ENCODE measurements at regions of chr1 and their contacts with region 1.

Region 1: DNA sequence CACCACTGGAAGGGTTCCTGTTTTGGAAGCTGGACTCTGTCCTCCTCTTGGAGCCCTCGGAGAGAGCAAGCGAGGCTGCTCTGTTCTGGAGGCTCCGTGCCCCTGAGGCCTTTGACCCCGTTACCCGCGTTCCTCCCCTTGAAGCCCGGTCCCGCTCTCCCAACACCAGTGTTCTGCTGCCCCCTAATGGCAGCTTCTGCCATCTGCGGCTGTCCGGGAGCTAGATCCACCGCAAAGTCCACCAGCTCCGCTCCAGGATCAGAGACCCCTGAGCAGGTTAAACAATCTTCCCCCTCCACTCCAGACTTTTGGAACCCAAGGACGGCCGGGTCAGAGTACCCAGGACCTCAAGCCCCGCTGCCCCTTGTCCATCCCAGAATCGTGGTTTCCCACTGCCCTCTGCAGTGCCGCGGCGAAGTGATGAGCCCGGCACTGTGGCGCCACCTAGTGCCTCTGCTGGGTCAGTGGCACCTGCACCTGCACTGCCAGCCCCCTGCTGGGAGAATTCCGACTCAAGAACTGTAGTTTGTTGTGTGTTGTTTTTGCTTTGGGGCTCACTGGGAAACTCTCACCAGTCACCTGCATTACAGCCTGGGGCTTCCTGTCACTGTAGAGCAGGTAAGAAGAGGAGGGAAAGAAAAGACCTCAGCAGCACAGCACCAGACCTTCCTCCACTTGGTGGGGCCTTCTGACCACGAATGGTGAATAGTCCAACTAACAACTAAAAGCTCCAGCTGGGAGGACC is 63.5 kb upstream of the NFASC start:
- DNase-seq: peak; percentile 90
- H3K4me3 Mint-ChIP-seq: peak overlapping the region; percentile 66
- H3K27ac Mint-ChIP-seq: no peak overlapping the region
- H3K4me1 Mint-ChIP-seq: no peaks in the 10 kb centered on the region
- H3K27me3 Mint-ChIP-seq: peaks cover 42% of the 10 kb centered on the region
- CTCF ChIP-seq: peak; percentile 100

Region 2: DNA sequence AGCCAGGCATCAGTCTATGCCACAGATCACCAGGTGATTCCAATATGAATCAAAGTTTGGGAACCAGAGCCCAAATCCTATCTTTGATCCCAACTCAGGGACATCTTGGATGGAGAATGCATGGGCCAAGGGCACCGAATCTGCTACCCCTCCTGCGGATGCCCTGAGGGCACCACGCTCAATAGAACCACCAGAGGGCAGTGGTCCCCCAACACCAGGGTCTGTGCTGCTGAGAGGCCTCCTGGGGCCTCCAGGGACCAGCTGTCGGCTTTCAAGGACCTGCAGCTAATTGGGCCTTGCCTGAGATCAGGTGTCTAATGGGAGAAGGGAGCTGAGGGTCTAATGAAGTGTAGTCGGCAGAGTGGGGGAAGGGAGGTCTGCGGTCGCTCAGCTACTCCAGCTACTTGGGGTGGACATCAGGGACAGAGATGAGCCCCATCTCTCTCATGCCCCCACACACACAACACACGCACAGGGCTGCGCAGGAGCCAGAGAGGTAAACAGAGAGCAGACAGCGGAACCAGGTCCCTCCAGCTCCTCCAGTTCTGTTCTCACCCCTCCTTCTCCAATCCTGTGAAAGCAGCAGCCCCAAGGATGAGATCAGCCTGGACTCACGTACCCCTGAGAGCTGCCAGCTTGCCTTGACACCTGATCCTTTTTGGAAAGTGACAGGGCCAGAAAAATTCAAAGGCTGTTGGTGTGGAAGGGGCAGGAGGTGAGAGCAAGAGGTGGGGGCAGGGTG is 360.6 kb before region 1 on chr1:
- CTCF ChIA-PET with region 1: interaction called, 10 read pairs
- intact Hi-C with region 1: no loop called
- DNase-seq: peak; percentile 89
- H3K4me3 Mint-ChIP-seq: no peak overlapping the region
- H3K27ac Mint-ChIP-seq: no peak overlapping the region
- H3K4me1 Mint-ChIP-seq: peaks cover 79% of the 10 kb centered on the region
- H3K27me3 Mint-ChIP-seq: no peaks in the 10 kb centered on the region
- CTCF ChIP-seq: peak; percentile 73

Region 3: DNA sequence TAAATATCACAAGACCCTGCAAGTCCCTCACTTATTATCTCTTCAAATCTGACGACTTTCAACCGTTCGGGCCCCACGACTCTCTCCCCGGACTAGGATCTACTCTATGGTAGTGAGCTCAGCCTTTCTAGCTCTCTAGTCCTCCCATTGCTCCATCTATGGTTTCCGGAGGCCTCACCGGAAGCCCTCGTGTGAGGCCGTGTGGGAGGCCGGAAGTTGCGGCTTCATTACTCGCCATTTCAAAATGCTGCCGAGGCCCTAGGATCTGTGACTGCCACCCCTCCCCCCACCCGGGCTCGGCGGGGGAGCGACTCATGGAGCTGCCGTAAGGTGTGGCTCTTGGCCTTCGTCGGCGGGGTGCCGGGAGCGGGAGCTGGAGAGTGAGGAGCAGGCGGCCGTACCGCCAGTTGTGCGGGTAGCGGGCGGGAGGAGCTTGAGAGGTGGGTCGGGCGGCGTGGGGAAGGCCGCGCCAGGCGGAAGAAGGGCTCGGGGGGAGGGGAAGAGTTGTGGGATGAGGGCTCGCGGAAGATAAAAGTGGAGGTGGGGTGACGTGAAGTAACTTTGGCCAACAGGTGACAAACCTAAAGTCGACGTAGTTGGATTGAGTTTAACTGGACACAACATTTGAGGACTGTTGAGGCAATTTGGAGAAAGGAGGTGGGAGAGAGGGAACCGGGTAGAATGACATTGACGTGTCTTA is 290.8 kb before region 1 on chr1 and contains the start of gene MDM4:
- CTCF ChIA-PET with region 1: interaction called, 12 read pairs
- intact Hi-C with region 1: no loop called
- DNase-seq: peak; percentile 95
- H3K4me3 Mint-ChIP-seq: no peak within 1 kb of the TSS
- H3K27ac Mint-ChIP-seq: no peak within 1 kb of the TSS
- H3K4me1 Mint-ChIP-seq: peaks cover 11% of the 10 kb centered on the region
- H3K27me3 Mint-ChIP-seq: no peaks in the 10 kb centered on the region
- CTCF ChIP-seq: no peak
- total RNA-seq, gene MDM4: 101 and 106 TPM in 2 replicates

Region 4: DNA sequence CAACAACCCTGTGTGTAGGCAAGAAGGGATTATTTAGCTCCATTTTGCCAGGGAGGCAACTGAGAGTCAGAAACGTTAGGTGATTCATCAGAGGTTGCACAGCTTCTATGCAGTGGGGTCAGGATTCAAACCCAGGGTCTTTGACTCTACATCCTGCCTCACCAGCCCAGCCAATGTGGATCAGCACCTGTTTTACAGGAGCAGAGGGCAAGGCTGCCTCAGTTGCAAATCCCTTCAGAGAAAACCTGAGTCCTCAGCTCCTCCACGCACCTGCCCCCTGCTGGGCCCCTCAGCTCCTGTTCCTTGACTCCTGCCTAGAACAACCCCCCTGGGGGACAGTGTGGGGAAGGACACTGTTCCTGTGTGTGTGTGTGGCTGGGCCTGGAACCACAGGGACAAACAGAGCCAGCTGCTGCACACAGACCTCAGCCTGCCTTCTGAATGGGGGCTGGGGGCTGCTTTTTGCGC is 183.2 kb before region 1 on chr1:
- CTCF ChIA-PET with region 1: interaction called, 19 read pairs
- intact Hi-C with region 1: no loop called
- DNase-seq: peak; percentile 55
- H3K4me3 Mint-ChIP-seq: no peak overlapping the region
- H3K27ac Mint-ChIP-seq: no peak overlapping the region
- H3K4me1 Mint-ChIP-seq: peaks cover 42% of the 10 kb centered on the region
- H3K27me3 Mint-ChIP-seq: peaks cover 41% of the 10 kb centered on the region
- CTCF ChIP-seq: peak; percentile 54

Region 5: GRCh38 chr1:204763706-204764427 is 43.2 kb before region 1 on chr1:
- CTCF ChIA-PET with region 1: interaction called, 18 read pairs
- intact Hi-C with region 1: no loop called
- DNase-seq: peak; percentile 90
- H3K4me3 Mint-ChIP-seq: no peak overlapping the region
- H3K27ac Mint-ChIP-seq: no peak overlapping the region
- H3K4me1 Mint-ChIP-seq: peaks cover 10% of the 10 kb centered on the region
- H3K27me3 Mint-ChIP-seq: peaks cover 87% of the 10 kb centered on the region
- CTCF ChIP-seq: peak; percentile 91

Region 6: DNA sequence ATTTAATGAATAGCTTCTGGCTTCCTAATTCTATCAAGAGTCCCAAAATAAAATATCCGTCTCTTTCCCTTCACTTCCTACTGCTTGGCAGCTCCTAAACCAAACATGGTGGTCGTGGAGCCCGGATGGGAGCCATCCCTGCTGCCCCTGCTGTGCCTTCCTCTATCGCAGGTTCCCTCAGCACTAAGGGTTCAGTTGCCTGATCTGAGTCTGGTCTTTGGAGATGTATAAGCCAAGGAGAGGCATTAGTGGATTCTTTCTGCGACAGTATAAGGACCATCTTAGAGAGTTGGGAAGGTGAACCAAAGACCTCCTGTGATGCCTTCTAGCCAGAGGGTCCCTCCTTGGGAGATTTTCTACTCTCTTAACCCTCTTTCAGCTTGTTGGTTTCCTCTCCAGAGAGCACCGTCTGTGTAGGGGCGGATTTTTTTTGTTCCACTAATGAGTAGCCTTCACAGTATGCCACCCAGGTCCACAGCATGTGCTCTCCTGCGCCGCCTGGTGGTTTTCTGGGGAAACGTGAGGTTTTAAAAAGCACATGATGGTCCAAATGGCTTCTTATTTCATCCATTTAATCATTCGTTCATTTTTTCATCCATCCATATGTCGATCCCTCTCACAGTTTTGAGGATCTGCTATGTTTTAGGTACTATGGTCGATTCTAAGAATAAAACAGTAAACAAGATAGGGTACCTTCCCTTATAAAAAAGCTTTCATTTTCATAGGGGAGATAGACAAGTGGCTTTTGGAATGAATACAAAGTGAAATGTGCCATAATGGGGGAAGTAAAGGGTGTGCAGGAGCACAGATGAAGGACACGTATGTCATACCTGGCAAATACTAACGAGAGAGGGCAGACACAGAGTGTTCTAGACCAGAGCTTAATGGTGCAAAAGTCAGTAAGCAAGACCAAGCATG is 134.6 kb after region 1 on chr1:
- CTCF ChIA-PET with region 1: interaction called, 16 read pairs
- intact Hi-C with region 1: loop called (anchors 1 kb)
- DNase-seq: peak; percentile 75
- H3K4me3 Mint-ChIP-seq: no peak overlapping the region
- H3K27ac Mint-ChIP-seq: no peak overlapping the region
- H3K4me1 Mint-ChIP-seq: no peaks in the 10 kb centered on the region
- H3K27me3 Mint-ChIP-seq: peaks cover 9% of the 10 kb centered on the region
- CTCF ChIP-seq: peak; percentile 80

Region 7: DNA sequence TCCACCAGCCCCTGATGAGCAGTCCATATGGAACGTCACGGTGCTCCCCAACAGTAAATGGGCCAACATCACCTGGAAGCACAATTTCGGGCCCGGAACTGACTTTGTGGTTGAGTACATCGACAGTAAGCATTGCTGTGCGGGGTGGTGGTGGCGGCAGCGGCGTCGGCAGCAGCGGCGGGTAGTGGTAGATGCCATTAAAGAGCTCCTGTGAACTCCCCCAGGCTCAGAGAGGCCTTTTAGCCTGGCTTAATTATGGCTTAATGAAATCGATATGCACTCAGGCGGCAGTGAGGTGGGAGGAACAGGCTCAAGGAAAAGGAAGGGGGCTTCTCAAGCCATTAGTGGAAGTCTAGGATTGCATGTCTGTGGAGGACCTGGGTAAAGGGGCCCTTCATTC is 194.0 kb after region 1 on chr1:
- CTCF ChIA-PET with region 1: no interaction called
- intact Hi-C with region 1: no loop called
- DNase-seq: no peak
- H3K4me3 Mint-ChIP-seq: no peak overlapping the region
- H3K27ac Mint-ChIP-seq: no peak overlapping the region
- H3K4me1 Mint-ChIP-seq: no peaks in the 10 kb centered on the region
- H3K27me3 Mint-ChIP-seq: peaks cover 100% of the 10 kb centered on the region
- CTCF ChIP-seq: no peak

Measured in Calu3 (cell line).